ENCODE measurements at regions of chr5 and their contacts with region 1.

Region 1: GRCh38 chr5:141564216-141564692 is 54.5 kb downstream of the DIAPH1 start:
- DNase-seq: peak in 4 of 6 donors; percentile 38 to 76 (median 70)
- ATAC-seq: peak; percentile 39 to 70 (median 64)
- H3K4me3 ChIP-seq: no peak overlapping the region
- H3K27ac ChIP-seq: peak overlapping the region in 2 of 4 donors; percentile 16 to 47
- H3K4me1 ChIP-seq: peaks cover 10 to 22% (median 16%) of the 10 kb centered on the region in 3 donors
- H3K27me3 ChIP-seq: no peaks in the 10 kb centered on the region
- CTCF ChIP-seq: peak; percentile 83 to 96 (median 88)

Region 2: GRCh38 chr5:141084487-141084990 is 479.7 kb before region 1 on chr5:
- intact Hi-C with region 1: loop called in 1 of 3 experiments (anchors 10 kb)
- DNase-seq: peak in 5 of 6 donors; percentile 51 to 70 (median 63)
- ATAC-seq: peak; percentile 99 to 100 (median 100)
- H3K4me3 ChIP-seq: peak overlapping the region; percentile 5 to 49 (median 27)
- H3K27ac ChIP-seq: peak overlapping the region in 3 of 4 donors; percentile 15 to 63 (median 45)
- H3K4me1 ChIP-seq: no peaks in the 10 kb centered on the region
- H3K27me3 ChIP-seq: no peaks in the 10 kb centered on the region
- CTCF ChIP-seq: peak in 3 of 4 donors; percentile 21 to 57 (median 52)

Region 3: GRCh38 chr5:141199359-141200235 is 364.7 kb before region 1 on chr5 and contains the start of gene PCDHB11:
- intact Hi-C with region 1: loop called in 1 of 3 experiments (anchors 10 kb)
- DNase-seq: peak in 2 of 6 donors; percentile 23 to 30
- ATAC-seq: peak; percentile 76 to 98 (median 84)
- H3K4me3 ChIP-seq: peak within 1 kb of the TSS in 2 of 4 donors; percentile 25 to 38
- H3K27ac ChIP-seq: peak within 1 kb of the TSS in 1 of 4 donors; percentile 41
- H3K4me1 ChIP-seq: no peaks in the 10 kb centered on the region
- H3K27me3 ChIP-seq: peaks cover 0 to 8% (median 3%) of the 10 kb centered on the region in 4 donors
- CTCF ChIP-seq: peak in 2 of 4 donors; percentile 10 to 26
- total RNA-seq, gene PCDHB11: 2.1 to 9.0 (median 4.9) TPM

Region 4: GRCh38 chr5:141598391-141599350 is 34.4 kb after region 1 on chr5:
- intact Hi-C with region 1: no loop called
- DNase-seq: no peak
- ATAC-seq: peak in 3 of 4 donors; percentile 41 to 69 (median 49)
- H3K4me3 ChIP-seq: no peak overlapping the region
- H3K27ac ChIP-seq: no peak overlapping the region
- H3K4me1 ChIP-seq: peaks cover 0 to 12% (median 3%) of the 10 kb centered on the region in 3 donors
- H3K27me3 ChIP-seq: no peaks in the 10 kb centered on the region
- CTCF ChIP-seq: no peak

Region 5: DNA sequence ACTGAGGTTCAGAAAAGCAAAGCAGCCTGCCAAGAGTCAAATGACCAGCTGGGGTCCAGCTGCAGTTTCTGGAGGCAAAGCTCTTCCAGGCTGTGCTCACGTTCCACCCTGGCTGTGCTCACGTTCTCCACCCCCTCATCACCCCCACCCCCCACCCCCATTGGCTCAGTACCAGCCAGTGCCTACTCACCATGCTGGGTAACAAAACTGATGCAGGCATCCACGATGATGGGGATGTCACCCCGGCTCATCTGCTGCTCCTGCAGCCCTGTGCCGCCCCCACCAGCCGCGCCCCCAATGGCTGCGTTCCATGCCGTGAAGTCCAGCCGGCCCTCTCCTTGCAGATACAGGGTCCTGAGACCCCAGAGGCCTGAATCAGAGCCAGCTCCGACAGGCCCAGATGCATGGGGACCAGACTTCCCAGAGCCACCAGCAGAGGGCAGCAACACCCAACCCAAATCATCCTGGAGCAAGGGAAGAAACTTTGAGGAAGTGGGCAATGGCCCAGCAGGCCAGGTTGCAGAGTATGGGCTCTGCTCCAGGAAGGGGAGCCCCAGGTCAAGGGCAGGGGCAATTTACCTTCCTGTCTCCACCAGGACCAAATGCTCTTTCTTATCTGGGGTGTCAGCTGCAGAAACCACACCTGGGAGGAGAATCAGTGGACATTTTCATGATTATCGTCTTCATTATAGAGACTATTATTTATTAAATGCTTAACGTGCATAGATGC is 100.6 kb after region 1 on chr5:
- intact Hi-C with region 1: no loop called
- DNase-seq: peak; percentile 79 to 91 (median 90)
- ATAC-seq: peak; percentile 94 to 100 (median 97)
- H3K4me3 ChIP-seq: no peak overlapping the region
- H3K27ac ChIP-seq: no peak overlapping the region
- H3K4me1 ChIP-seq: peaks cover 0 to 4% (median 0%) of the 10 kb centered on the region in 3 donors
- H3K27me3 ChIP-seq: no peaks in the 10 kb centered on the region
- CTCF ChIP-seq: peak; percentile 82 to 95 (median 94)

Measured in pancreas (tissue), 10 donors.